Aorta (tissue), 5 donors: ENCODE measurements at regions of chr3 and their contacts with region 1.

Region 1: DNA sequence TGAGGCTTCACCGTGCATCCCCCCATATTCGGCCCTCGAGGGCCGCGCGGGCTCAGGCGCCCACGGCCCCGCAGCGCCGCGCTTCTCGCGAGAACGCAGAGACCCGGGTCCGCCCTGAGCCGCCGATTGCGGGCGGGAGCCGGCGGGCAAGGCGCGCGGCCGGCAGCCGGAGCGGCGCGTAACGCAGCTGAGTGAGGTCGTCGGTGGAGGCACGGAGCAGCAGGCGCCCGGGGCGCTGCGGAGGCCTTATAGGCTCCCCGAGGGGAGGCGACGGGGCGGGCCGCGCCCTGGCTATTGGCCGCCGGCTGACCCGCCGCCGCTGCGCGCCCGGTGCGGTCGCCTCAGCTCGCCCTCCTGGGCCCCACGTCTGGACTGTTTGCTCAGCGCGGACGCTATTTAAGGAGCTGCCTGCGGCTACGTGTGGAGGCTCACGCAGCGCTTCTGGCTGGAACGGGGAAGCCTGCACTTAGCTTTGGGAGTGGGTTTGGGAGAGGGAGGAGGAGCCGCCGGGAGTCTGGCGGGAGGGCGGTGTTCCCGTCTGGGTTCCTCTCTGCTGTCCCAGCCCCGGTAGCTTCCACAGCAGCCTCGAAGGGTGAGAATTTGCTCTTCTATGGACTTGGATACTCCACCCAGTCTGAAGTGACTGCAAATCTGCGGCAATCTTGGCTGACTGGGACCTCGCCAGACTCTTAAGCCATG is at the start of gene PLOD2:
- DNase-seq: peak; percentile 93
- ATAC-seq: peak; percentile 92
- H3K4me3 ChIP-seq: peak within 1 kb of the TSS; percentile 77 to 86
- H3K27ac ChIP-seq: peak within 1 kb of the TSS; percentile 93 to 99
- H3K4me1 ChIP-seq: peaks cover 5% of the 10 kb centered on the region in 2 donors
- H3K27me3 ChIP-seq: no peaks in the 10 kb centered on the region
- total RNA-seq, gene PLOD2: 109 to 147 TPM

Region 2: GRCh38 chr3:146072824-146073223 is 88.3 kb before region 1 on chr3:
- intact Hi-C with region 1: loop called (anchors 10 kb)
- DNase-seq: no peak
- ATAC-seq: no peak
- H3K4me3 ChIP-seq: no peak overlapping the region
- H3K27ac ChIP-seq: no peak overlapping the region
- H3K4me1 ChIP-seq: no peaks in the 10 kb centered on the region
- H3K27me3 ChIP-seq: no peaks in the 10 kb centered on the region

Region 3: GRCh38 chr3:146125951-146126350 is 35.2 kb before region 1 on chr3:
- intact Hi-C with region 1: loop called (anchors 5 kb)
- DNase-seq: no peak
- ATAC-seq: peak; percentile 90
- H3K4me3 ChIP-seq: no peak overlapping the region
- H3K27ac ChIP-seq: no peak overlapping the region
- H3K4me1 ChIP-seq: peaks cover 0 to 4% of the 10 kb centered on the region in 2 donors
- H3K27me3 ChIP-seq: no peaks in the 10 kb centered on the region

Region 4: DNA sequence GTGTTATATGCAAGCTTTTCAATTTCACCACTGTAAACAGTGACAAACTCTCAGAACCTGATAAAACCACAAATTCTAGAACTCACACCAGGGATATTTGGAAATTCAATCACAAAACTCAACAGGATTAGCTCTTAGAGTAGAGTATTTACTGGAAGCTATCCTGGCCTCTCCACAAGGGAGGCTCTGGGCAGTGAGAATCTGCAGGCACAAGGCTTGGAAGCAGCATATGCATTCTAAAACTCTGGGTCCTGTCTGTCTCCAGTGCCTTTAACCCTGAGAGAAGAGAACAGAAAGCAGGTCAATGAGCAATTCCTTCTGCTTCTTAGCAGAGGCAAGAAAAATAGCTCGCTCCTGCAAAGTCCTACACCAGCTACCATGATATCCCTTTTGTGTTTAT is 66.4 kb after region 1 on chr3:
- intact Hi-C with region 1: no loop called
- DNase-seq: no peak
- ATAC-seq: no peak
- H3K4me3 ChIP-seq: no peak overlapping the region
- H3K27ac ChIP-seq: no peak overlapping the region
- H3K4me1 ChIP-seq: peaks cover 6 to 10% of the 10 kb centered on the region in 2 donors
- H3K27me3 ChIP-seq: no peaks in the 10 kb centered on the region